Right cardiac atrium (tissue), 5 donors: ENCODE measurements at regions of chr20 and their contacts with region 1.

Region 1: GRCh38 chr20:8722276-8722928 is 346.5 kb upstream of the PLCB4 start:
- DNase-seq: peak in 1 of 3 donors; percentile 9
- ATAC-seq: peak; percentile 83 to 88
- H3K4me3 ChIP-seq: no peak overlapping the region
- H3K27ac ChIP-seq: no peak overlapping the region
- H3K4me1 ChIP-seq: no peaks in the 10 kb centered on the region
- H3K27me3 ChIP-seq: no peaks in the 10 kb centered on the region

Region 2: DNA sequence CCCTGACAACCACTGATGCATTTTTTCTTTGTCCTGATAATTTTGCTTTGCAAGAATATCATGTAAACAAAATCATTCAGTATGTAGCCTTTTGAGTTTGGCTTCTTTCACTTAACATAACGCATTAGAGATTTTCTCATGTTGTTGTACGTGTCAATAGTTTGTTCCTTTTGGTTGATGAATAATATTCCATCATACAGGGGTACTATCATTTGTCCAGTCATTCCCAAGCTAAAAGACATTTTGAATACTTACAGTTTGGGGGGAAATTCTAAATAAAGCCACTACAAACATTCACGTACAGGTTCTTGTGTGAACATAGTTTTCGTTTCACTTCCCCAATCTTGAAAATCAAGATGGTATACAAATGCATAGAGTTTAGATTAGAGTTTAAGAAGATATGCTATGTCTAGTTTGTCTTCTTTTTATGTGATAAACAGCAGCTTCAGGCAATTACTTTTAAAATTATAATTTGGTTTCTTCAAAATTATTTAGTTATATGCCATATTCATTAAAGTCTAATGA is 787.3 kb before region 1 on chr20:
- intact Hi-C with region 1: loop called (anchors 5 to 10 kb)
- DNase-seq: no peak
- ATAC-seq: no peak
- H3K4me3 ChIP-seq: no peak overlapping the region
- H3K27ac ChIP-seq: no peak overlapping the region
- H3K4me1 ChIP-seq: no peaks in the 10 kb centered on the region
- H3K27me3 ChIP-seq: no peaks in the 10 kb centered on the region

Region 3: DNA sequence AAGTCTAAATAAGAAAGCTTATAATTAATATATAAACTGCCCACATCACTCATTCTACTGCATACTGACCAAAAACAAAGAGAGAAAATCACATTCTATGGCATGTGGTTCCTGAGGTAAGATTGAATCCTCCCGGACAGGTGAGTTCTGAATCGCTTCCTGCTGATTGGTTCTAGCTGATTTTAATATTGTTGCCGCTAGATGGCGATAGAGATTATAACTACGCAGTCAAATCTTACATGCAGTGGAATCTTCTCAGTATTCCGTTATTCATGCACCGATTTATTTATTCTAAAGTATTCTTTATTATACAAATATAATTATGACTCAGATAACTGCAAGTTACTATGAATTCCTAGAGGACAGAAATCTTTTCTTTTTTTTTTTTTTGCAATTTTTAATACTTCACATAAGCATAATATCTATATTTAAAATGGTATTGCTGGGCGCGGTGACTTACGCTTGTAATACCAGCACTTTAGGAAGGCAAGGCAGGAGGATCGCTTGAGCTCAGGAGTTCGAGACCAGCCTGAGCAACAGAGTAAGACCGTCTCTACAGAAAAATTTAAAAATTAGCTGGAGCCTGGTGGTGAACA is 678.6 kb before region 1 on chr20:
- intact Hi-C with region 1: loop called (anchors 2 to 10 kb)
- DNase-seq: peak in 1 of 3 donors; percentile 36
- ATAC-seq: peak; percentile 47 to 68
- H3K4me3 ChIP-seq: no peak overlapping the region
- H3K27ac ChIP-seq: no peak overlapping the region
- H3K4me1 ChIP-seq: no peaks in the 10 kb centered on the region
- H3K27me3 ChIP-seq: no peaks in the 10 kb centered on the region

Region 4: DNA sequence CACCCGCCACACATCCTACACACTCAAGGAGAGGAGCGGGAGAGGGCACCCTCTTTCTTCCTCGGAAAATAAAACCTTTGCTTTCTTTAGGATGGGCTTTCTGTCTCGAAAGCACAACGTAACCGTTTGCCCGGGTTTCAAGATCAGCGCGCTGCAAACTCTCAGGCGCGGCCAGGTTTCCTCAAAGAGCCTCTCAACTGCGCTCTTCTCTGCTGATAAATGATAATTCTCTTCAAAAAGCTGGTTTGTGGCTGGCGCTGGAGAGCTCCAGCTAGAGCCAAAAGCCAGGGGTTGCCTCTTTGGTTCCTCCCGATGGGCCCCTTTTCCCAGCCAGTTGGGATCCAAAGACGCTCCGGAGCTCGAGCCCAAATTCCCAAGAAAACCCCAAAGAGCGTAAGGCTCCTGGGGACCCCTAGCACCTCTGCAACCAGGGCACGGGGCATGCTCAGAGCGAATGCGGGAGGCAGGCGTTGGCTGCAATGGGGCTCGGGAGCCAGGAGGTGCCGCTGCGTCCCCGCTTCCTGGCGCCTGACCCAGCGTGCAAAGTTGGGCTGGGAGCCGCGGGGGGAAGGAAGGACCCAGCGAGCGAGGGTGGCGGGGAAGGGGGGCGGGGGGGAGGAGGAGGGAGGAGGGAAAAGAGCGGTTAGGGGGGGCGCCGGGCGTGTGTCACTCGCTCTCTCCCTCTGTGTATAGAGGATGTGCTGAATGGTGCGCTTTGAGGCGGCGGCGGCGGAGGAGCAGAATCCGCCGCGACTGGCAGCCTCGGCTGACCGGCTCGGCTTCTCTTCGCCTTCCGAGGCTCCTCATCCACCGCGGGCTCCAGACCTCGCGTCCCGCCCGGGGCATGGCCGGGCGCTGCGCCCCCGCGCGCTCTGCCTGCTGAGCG is 590.6 kb before region 1 on chr20 and contains the start of gene PLCB1:
- intact Hi-C with region 1: loop called (anchors 2 to 10 kb)
- DNase-seq: peak; percentile 89 to 96 (median 96)
- ATAC-seq: peak; percentile 92 to 95
- H3K4me3 ChIP-seq: peak within 1 kb of the TSS; percentile 88
- H3K27ac ChIP-seq: peak within 1 kb of the TSS; percentile 33
- H3K4me1 ChIP-seq: no peaks in the 10 kb centered on the region
- H3K27me3 ChIP-seq: no peaks in the 10 kb centered on the region
- total RNA-seq, gene PLCB1: 11.4 to 20.3 (median 14.1) TPM

Region 5: DNA sequence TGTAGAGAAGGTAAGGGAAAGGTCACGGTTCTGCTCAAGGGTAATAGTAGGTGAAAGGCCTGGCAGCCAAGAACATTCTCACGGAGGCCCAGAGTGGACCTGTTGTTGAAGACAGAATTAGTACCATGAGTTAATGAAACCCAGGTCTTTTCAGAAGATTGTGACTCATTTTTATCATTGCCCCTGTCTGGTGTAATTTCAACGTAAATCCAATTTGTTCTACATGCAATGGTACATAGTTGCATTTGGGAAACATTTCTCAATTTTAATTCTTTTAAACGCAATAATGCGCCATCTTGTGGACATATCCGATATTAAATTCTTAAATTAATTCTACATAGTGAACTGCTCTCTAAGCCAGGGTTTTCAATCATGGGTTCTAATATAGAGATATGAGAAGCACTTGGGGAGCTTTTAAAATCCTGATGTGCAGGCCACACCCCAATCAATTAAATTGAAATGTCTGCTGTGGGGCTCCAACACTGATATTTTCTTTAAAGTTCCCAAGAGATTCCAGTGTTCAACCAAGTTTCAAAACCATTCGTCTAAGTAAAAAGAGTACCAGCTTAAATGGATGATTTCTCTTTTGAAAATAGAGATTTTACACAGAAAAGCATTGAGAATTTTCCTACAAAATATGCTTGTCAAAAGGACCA is 332.9 kb before region 1 on chr20:
- intact Hi-C with region 1: loop called in 2 of 4 experiments (anchors 10 kb)
- DNase-seq: no peak
- ATAC-seq: peak; percentile 41 to 61
- H3K4me3 ChIP-seq: no peak overlapping the region
- H3K27ac ChIP-seq: no peak overlapping the region
- H3K4me1 ChIP-seq: peaks cover 3% of the 10 kb centered on the region
- H3K27me3 ChIP-seq: no peaks in the 10 kb centered on the region

Region 6: GRCh38 chr20:8545212-8545611 is 177.2 kb before region 1 on chr20:
- intact Hi-C with region 1: loop called in 1 of 4 experiments (anchors 10 kb)
- DNase-seq: no peak
- ATAC-seq: peak; percentile 48 to 53
- H3K4me3 ChIP-seq: no peak overlapping the region
- H3K27ac ChIP-seq: no peak overlapping the region
- H3K4me1 ChIP-seq: peaks cover 1% of the 10 kb centered on the region
- H3K27me3 ChIP-seq: no peaks in the 10 kb centered on the region

Region 7: GRCh38 chr20:8583566-8584043 is 138.8 kb before region 1 on chr20:
- intact Hi-C with region 1: no loop called
- DNase-seq: no peak
- ATAC-seq: no peak
- H3K4me3 ChIP-seq: no peak overlapping the region
- H3K27ac ChIP-seq: no peak overlapping the region
- H3K4me1 ChIP-seq: no peaks in the 10 kb centered on the region
- H3K27me3 ChIP-seq: no peaks in the 10 kb centered on the region

Region 8: GRCh38 chr20:8790442-8791074 is 68.2 kb after region 1 on chr20:
- intact Hi-C with region 1: no loop called
- DNase-seq: peak in 1 of 3 donors; percentile 46
- ATAC-seq: peak in 1 of 2 donors; percentile 36
- H3K4me3 ChIP-seq: no peak overlapping the region
- H3K27ac ChIP-seq: no peak overlapping the region
- H3K4me1 ChIP-seq: no peaks in the 10 kb centered on the region
- H3K27me3 ChIP-seq: no peaks in the 10 kb centered on the region